ENCODE measurements at regions of chr12 and their contacts with region 1.

Region 1: GRCh38 chr12:31245822-31246469 is 80.0 kb downstream of the SINHCAF start:
- DNase-seq: peak; percentile 33 to 62 (median 42)
- ATAC-seq: peak; percentile 94
- H3K4me3 ChIP-seq: no peak overlapping the region
- H3K27ac ChIP-seq: no peak overlapping the region
- H3K4me1 ChIP-seq: no peaks in the 10 kb centered on the region
- H3K27me3 ChIP-seq: peaks cover 23 to 30% of the 10 kb centered on the region in 2 experiments
- CTCF ChIP-seq: peak; percentile 76 to 98 (median 96)
- EP300 ChIP-seq: no peak
- POLR2A ChIP-seq: no peak
- RAD21 ChIP-seq: peak; percentile 51 to 83; a peak in 3 of 4 replicates

Region 2: DNA sequence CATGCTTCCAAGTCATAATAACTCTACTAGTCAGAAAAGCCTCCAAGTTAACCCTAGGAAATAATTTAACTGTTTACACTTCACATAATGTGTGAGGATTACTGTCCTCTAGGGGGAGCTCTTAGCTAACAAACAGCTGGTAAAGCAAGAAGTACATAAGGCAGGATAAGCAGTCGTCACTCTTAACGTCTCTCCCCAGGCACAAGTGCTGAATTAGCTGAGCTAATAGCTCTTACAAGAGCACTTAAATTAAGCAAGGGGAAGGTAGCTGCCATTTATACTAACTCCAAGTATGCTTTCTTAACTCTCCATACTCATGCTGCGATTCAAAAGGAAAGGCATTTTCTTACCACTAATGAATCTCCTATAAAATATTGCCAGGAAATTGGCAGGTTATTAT is 398.7 kb before region 1 on chr12:
- CTCF ChIA-PET with region 1: interaction called, 3 read pairs
- POLR2A ChIA-PET with region 1: no interaction called
- in situ Hi-C with region 1: no loop called
- intact Hi-C with region 1: loop called (anchors 2 kb)
- DNase-seq: peak in 3 of 4 experiments; percentile 37 to 81 (median 40)
- ATAC-seq: peak; percentile 65
- H3K4me3 ChIP-seq: no peak overlapping the region
- H3K27ac ChIP-seq: no peak overlapping the region
- H3K4me1 ChIP-seq: peaks cover 0 to 2% of the 10 kb centered on the region in 2 experiments; a peak in 3 of 5 replicates
- H3K27me3 ChIP-seq: peaks cover 6 to 13% of the 10 kb centered on the region in 2 experiments; a peak in 4 of 5 replicates
- CTCF ChIP-seq: peak; percentile 66 to 83 (median 70)
- EP300 ChIP-seq: no peak
- POLR2A ChIP-seq: no peak
- RAD21 ChIP-seq: peak; percentile 86 to 96

Region 3: DNA sequence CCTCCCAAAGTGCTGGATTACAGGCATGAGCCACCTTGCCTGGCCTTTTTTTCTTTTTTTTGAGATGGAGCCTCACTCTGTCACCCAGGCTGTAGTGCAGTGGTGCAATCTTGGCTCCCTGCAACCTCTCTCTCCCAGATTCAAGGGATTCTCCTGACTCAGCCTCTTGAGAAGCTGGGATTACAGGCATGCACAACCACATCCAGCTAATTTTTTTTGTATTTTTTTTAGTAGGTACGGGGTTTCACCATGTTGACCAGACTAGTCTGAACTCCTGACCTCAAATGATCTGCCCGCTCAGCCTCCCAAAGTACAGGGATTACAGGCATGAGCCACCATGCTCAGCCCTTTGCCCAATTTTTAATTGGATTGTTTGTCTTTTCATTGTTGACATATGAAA is 22.0 kb after region 1 on chr12:
- CTCF ChIA-PET with region 1: interaction called, 16 read pairs
- POLR2A ChIA-PET with region 1: interaction called, 7 read pairs
- in situ Hi-C with region 1: no loop called
- intact Hi-C with region 1: no loop called
- DNase-seq: no peak
- ATAC-seq: no peak
- H3K4me3 ChIP-seq: no peak overlapping the region
- H3K27ac ChIP-seq: no peak overlapping the region
- H3K4me1 ChIP-seq: no peaks in the 10 kb centered on the region
- H3K27me3 ChIP-seq: no peaks in the 10 kb centered on the region
- CTCF ChIP-seq: no peak
- EP300 ChIP-seq: no peak
- POLR2A ChIP-seq: no peak
- RAD21 ChIP-seq: no peak

Region 4: GRCh38 chr12:31393004-31393550 is 147.1 kb after region 1 on chr12:
- CTCF ChIA-PET with region 1: no interaction called
- POLR2A ChIA-PET with region 1: no interaction called
- in situ Hi-C with region 1: no loop called
- intact Hi-C with region 1: loop called (anchors 5 kb)
- DNase-seq: no peak
- ATAC-seq: no peak
- H3K4me3 ChIP-seq: no peak overlapping the region
- H3K27ac ChIP-seq: no peak overlapping the region
- H3K4me1 ChIP-seq: no peaks in the 10 kb centered on the region
- H3K27me3 ChIP-seq: no peaks in the 10 kb centered on the region; a peak in 1 of 5 replicates
- CTCF ChIP-seq: no peak
- EP300 ChIP-seq: no peak
- POLR2A ChIP-seq: no peak
- RAD21 ChIP-seq: no peak

Region 5: DNA sequence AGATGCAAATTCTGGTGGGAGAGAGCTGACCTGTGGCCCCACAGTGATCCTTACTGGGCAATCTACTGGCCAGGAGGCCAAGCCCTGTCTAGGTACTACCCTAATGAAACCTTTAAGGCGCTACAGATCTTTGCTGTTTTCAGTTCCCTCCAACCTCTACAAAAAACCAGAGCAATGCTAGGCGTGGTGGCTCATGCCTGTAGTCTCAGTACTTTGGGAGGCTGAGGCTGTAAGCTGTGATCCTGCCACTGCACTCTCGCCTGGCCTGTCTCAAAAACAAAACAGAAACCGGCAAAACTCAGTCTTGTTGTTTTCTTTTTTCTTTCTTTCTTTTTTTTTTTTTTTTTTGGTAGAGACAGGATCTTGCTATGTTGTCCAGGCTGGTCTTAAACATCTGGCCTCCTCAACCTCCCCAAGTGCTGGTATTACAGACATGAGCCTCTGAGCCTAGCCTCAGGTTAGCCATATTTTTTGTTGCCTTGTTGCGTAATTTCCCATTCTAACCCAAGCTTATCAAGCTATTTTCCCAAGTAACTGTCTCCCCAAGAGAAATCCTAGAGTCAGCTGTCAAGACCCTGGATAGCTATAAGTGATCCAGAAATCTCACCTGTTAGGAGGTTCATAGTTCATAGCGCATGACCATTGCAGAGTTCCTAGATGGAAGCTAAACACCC is 416.4 kb after region 1 on chr12:
- CTCF ChIA-PET with region 1: no interaction called
- POLR2A ChIA-PET with region 1: no interaction called
- in situ Hi-C with region 1: no loop called
- intact Hi-C with region 1: no loop called
- DNase-seq: no peak
- ATAC-seq: no peak
- H3K4me3 ChIP-seq: no peak overlapping the region
- H3K27ac ChIP-seq: no peak overlapping the region
- H3K4me1 ChIP-seq: no peaks in the 10 kb centered on the region; a peak in 1 of 5 replicates
- H3K27me3 ChIP-seq: no peaks in the 10 kb centered on the region
- CTCF ChIP-seq: no peak
- EP300 ChIP-seq: no peak
- POLR2A ChIP-seq: no peak
- RAD21 ChIP-seq: no peak